Posterior vena cava (tissue), 2 donors: ENCODE measurements at regions of chr16 and their contacts with region 1.

Region 1: GRCh38 chr16:21946889-21947635 is 6.1 kb upstream of the UQCRC2 start:
- DNase-seq: no peak

Region 2: DNA sequence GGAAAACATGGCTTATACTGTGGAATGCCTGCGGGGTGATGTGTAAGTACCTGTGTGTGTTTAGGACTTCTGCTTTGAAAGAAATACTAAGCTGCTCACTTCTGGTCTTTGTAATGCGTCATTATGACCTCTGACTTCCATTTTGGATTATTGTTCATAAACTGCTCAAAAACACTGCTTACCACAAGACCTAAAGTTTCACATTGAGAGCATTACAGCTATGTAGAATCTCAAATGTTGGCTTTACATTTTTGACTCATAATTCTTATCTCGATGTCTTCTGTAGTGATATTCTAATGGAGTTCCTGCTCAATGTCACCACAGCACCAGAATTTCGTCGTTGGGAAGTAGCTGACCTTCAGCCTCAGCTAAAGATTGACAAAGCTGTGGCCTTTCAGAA is 15.4 kb after region 1 on chr16:
- intact Hi-C with region 1: no loop called
- DNase-seq: no peak

Region 3: DNA sequence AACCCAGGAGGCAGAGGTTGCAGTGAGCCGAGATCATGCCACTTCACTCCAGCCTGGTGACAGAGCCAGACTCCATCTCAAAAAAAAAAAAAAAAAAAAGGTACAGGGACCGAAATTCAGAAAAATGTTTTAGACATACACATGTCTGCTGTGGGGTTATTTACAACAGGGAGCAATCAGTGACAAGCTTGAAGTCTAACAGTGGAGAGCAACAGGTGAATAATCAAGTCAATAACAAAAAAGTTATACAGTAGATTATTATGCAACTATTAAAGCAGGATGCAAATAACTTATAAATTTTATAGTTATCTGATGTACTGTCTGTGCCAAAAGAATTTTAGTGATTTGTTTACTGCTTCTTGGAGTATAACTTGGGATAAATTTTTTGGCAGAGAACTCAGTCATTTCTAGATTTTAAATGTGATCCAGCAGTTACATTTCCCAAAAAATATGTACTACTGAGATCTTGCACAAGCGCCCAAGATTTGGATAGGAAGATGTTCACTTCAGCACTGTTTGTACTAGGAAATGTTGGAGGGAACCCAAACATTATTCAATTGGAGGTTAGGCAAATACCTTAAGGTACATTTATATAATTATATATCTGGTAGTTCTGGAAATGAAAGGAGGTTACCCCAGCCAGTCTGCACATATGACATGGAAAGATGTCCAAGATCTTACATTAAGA is 293.1 kb after region 1 on chr16:
- intact Hi-C with region 1: loop called in 1 of 2 experiments (anchors 2 kb)
- DNase-seq: no peak